Endothelial cell of umbilical vein (primary cell): ENCODE measurements at regions of chr5 and their contacts with region 1.

Region 1: GRCh38 chr5:106116689-106117088 is 1554.0 kb downstream of the EFNA5 start:
- DNase-seq: no peak
- H3K4me3 ChIP-seq: no peak overlapping the region
- H3K27ac ChIP-seq: no peak overlapping the region
- H3K4me1 ChIP-seq: no peaks in the 10 kb centered on the region
- H3K27me3 ChIP-seq: no peaks in the 10 kb centered on the region
- CTCF ChIP-seq: no peak
- POLR2A ChIP-seq: no peak

Region 2: GRCh38 chr5:106875591-106876297 is 759.1 kb after region 1 on chr5:
- CTCF ChIA-PET with region 1: no interaction called
- POLR2A ChIA-PET with region 1: no interaction called
- dilution Hi-C with region 1: no loop called
- intact Hi-C with region 1: loop called (anchors 10 kb)
- DNase-seq: no peak
- H3K4me3 ChIP-seq: no peak overlapping the region
- H3K27ac ChIP-seq: no peak overlapping the region
- H3K4me1 ChIP-seq: no peaks in the 10 kb centered on the region
- H3K27me3 ChIP-seq: no peaks in the 10 kb centered on the region
- CTCF ChIP-seq: peak; percentile 13 to 28
- POLR2A ChIP-seq: no peak